Right ventricle myocardium superior (tissue), 1 donor: ENCODE measurements at regions of chr10 and their contacts with region 1.

Region 1: DNA sequence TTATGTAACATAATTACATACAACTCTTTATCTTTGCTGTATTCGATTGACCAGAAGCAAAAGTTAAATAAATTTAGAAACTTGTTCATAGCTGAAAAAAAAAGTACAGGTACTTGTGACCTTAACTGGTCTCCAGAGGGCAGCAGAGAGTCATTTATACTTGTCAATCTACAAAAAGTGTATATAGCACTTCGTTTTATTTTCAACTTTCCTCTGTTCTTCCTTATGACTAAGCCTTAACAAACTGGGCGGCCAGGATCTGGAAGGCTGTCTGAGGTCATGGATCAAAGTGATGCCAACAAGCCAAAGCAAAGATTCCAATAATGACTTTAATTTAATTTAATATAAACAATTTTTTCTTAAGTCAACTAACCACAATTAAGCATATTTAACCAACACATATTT is 29.8 kb downstream of the C10orf67 start:
- DNase-seq: no peak
- ATAC-seq: peak; percentile 68

Region 2: DNA sequence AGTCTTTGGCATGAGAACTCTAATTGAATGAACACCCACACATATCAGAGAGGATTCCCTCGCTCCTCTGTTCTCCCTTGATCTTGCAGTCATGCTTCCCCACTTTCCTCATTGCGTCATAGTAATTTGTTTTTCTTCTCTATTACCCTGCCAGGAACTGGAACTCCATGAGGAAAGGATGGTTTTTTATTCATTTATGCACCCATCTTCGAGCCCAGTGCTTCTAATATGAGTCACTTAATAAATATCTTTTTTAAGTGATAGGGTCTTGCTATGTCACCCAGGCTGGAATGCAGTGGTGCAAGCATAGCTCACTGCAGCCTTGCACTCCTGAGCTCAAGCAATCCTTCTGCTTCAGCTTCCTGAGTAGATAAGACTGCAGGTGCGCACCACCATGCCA is 207.5 kb after region 1 on chr10:
- intact Hi-C with region 1: loop called (anchors 5 kb)
- DNase-seq: no peak
- ATAC-seq: no peak

Region 3: DNA sequence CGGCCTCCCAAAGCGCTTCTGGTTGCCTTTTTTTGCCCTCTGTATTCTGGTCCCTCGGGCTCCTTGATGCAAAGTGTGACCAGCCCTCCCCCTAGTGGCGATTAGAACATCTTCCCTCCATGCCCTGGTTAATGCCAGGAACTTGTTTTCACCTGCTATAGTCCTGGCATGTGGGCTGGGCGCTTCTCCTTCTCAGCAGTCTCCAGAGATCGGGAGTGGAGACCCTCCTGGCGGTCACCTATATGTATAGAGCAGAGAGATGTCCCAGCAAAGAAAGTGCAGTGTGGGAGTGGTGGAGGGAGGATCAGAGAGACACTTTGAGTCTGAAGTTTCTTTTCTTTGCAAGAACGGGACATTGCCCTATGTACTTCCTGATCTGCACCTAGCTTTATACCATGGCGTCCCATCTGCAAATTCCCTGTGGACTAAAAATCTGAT is 388.2 kb after region 1 on chr10:
- intact Hi-C with region 1: loop called (anchors 10 kb)
- DNase-seq: peak; percentile 38
- ATAC-seq: peak; percentile 74